ENCODE measurements at regions of chr12 and their contacts with region 1.

Region 1: GRCh38 chr12:110468212-110469048 is at the starts of genes FAM216A and GPN3:
- DNase-seq: peak; percentile 88 to 97 (median 92)
- ATAC-seq: peak; percentile 89
- H3K4me3 ChIP-seq: peak within 1 kb of the TSS; percentile 72
- H3K4me3 Mint-ChIP-seq: peak within 1 kb of the TSS; percentile 97
- H3K27ac ChIP-seq: peak within 1 kb of the TSS; percentile 66 to 92
- H3K27ac Mint-ChIP-seq: peak within 1 kb of the TSS; percentile 88
- H3K4me1 ChIP-seq: peaks cover 29% of the 10 kb centered on the region
- H3K4me1 Mint-ChIP-seq: peaks cover 33% of the 10 kb centered on the region
- H3K27me3 ChIP-seq: no peaks in the 10 kb centered on the region
- H3K27me3 Mint-ChIP-seq: no peaks in the 10 kb centered on the region
- CTCF ChIP-seq: no peak
- total RNA-seq, gene FAM216A: 5.5 to 7.4 TPM
- total RNA-seq, gene GPN3: 2.7 to 2.8 TPM

Region 2: GRCh38 chr12:110367181-110367864 is 101.1 kb before region 1 on chr12:
- CTCF ChIA-PET with region 1: no interaction called
- POLR2A ChIA-PET with region 1: no interaction called
- intact Hi-C with region 1: no loop called
- DNase-seq: no peak
- ATAC-seq: no peak
- H3K4me3 ChIP-seq: no peak overlapping the region
- H3K4me3 Mint-ChIP-seq: no peak overlapping the region
- H3K27ac ChIP-seq: no peak overlapping the region
- H3K27ac Mint-ChIP-seq: no peak overlapping the region
- H3K4me1 ChIP-seq: no peaks in the 10 kb centered on the region
- H3K4me1 Mint-ChIP-seq: no peaks in the 10 kb centered on the region
- H3K27me3 ChIP-seq: no peaks in the 10 kb centered on the region
- H3K27me3 Mint-ChIP-seq: no peaks in the 10 kb centered on the region
- CTCF ChIP-seq: no peak

Region 3: DNA sequence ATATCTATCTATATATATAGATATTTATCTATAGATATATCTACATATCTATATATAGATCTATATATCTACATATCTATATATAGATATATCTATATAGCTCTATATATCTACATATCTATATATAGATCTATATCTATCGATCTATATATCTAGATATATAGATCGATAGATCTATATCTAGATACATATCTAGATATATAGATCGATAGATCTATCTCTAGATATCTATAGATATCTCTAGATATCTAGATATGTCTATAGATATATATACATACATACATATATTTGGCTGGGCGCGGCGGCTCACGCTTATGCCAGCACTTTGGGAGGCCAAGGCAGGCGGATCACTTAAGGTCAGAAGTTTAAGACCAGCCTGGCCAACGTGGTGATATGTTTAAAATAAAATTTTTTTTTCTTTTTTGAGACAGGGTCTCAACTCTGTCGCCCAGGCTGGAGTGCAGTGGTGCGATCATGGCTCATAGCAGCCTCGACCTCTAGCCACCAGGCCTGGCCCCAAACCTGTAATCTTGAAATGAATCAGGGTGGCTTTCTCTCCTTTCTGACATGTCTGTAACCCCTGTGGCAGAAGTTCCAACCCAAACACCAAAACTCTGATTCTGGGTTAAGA is 36.4 kb before region 1 on chr12:
- CTCF ChIA-PET with region 1: interaction called, 13 read pairs
- POLR2A ChIA-PET with region 1: interaction called, 17 read pairs
- intact Hi-C with region 1: no loop called
- DNase-seq: no peak
- ATAC-seq: no peak
- H3K4me3 ChIP-seq: peak overlapping the region; percentile 55
- H3K4me3 Mint-ChIP-seq: no peak overlapping the region
- H3K27ac ChIP-seq: no peak overlapping the region
- H3K27ac Mint-ChIP-seq: peak overlapping the region; percentile 96
- H3K4me1 ChIP-seq: peaks cover 2% of the 10 kb centered on the region
- H3K4me1 Mint-ChIP-seq: peaks cover 6% of the 10 kb centered on the region
- H3K27me3 ChIP-seq: no peaks in the 10 kb centered on the region
- H3K27me3 Mint-ChIP-seq: no peaks in the 10 kb centered on the region
- CTCF ChIP-seq: no peak

Region 4: GRCh38 chr12:110555577-110556406 is 87.4 kb after region 1 on chr12:
- CTCF ChIA-PET with region 1: interaction called, 3 read pairs
- POLR2A ChIA-PET with region 1: interaction called, 7 read pairs
- intact Hi-C with region 1: loop called in 1 of 2 experiments (anchors 1 kb)
- DNase-seq: no peak
- ATAC-seq: no peak
- H3K4me3 ChIP-seq: no peak overlapping the region
- H3K4me3 Mint-ChIP-seq: no peak overlapping the region
- H3K27ac ChIP-seq: no peak overlapping the region
- H3K27ac Mint-ChIP-seq: peak overlapping the region; percentile 25
- H3K4me1 ChIP-seq: peaks cover 35% of the 10 kb centered on the region
- H3K4me1 Mint-ChIP-seq: peaks cover 60% of the 10 kb centered on the region
- H3K27me3 ChIP-seq: no peaks in the 10 kb centered on the region
- H3K27me3 Mint-ChIP-seq: no peaks in the 10 kb centered on the region
- CTCF ChIP-seq: no peak

Region 5: GRCh38 chr12:110600254-110600653 is 131.8 kb after region 1 on chr12:
- CTCF ChIA-PET with region 1: interaction called, 49 read pairs
- POLR2A ChIA-PET with region 1: interaction called, 44 read pairs
- intact Hi-C with region 1: loop called (anchors 1 to 2 kb)
- DNase-seq: peak in 3 of 14 experiments; percentile 70 to 76 (median 74)
- ATAC-seq: peak; percentile 46
- H3K4me3 ChIP-seq: no peak overlapping the region
- H3K4me3 Mint-ChIP-seq: no peak overlapping the region
- H3K27ac ChIP-seq: no peak overlapping the region
- H3K27ac Mint-ChIP-seq: peak overlapping the region; percentile 0
- H3K4me1 ChIP-seq: peaks cover 5% of the 10 kb centered on the region
- H3K4me1 Mint-ChIP-seq: peaks cover 10% of the 10 kb centered on the region
- H3K27me3 ChIP-seq: no peaks in the 10 kb centered on the region
- H3K27me3 Mint-ChIP-seq: no peaks in the 10 kb centered on the region
- CTCF ChIP-seq: peak; percentile 71

Region 6: DNA sequence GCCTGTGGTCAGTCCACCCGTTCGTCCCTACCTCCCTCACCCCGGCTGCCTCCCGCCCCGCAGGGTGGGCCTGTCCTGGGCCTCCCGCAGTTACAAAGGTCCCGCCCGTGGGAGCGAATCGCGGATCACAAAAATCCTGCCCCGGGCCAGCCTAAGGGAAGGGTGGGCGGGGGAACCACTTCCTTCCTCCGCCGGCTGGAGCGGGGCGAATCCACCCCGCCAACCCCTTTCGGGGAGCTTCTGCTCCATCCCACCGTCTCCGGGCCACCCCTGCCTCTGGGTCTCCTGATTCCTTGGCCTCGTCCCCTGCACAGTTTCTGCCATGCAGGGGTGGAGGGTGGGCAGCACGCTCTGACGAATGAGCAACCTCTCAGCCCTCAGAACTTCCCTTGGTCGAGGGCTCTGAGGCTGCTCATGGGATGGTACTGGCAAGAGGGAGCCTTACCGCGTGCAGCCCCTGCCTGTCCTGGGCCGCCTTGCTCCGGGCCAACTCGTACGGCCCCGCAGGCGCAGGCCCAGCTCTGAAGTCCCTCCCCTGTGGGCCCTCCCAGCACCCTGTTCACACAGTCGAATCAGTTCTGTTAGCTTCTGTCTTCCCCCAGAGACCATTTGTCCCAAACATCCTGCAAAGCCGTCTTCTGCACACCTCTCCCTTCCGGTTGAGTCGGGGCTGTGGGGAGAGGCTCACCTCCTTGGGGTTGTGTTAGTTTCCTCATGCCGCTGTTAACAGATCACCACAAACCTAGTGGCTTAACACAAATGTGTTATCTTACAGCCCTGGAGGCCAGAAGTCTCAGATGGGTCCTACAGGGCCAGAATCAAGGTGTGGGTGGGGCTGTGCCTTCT is 221.1 kb after region 1 on chr12:
- CTCF ChIA-PET with region 1: no interaction called
- POLR2A ChIA-PET with region 1: interaction called, 10 read pairs
- intact Hi-C with region 1: no loop called
- DNase-seq: peak; percentile 18 to 73 (median 49)
- ATAC-seq: peak; percentile 74
- H3K4me3 ChIP-seq: peak overlapping the region; percentile 76
- H3K4me3 Mint-ChIP-seq: peak overlapping the region; percentile 90
- H3K27ac ChIP-seq: peak overlapping the region; percentile 44 to 50
- H3K27ac Mint-ChIP-seq: peak overlapping the region; percentile 74
- H3K4me1 ChIP-seq: peaks cover 32% of the 10 kb centered on the region
- H3K4me1 Mint-ChIP-seq: peaks cover 60% of the 10 kb centered on the region
- H3K27me3 ChIP-seq: no peaks in the 10 kb centered on the region
- H3K27me3 Mint-ChIP-seq: no peaks in the 10 kb centered on the region
- CTCF ChIP-seq: no peak

Measured in CD4-positive, alpha-beta T cell (primary cell).